ENCODE measurements at regions of chr2 and their contacts with region 1.

Region 1: DNA sequence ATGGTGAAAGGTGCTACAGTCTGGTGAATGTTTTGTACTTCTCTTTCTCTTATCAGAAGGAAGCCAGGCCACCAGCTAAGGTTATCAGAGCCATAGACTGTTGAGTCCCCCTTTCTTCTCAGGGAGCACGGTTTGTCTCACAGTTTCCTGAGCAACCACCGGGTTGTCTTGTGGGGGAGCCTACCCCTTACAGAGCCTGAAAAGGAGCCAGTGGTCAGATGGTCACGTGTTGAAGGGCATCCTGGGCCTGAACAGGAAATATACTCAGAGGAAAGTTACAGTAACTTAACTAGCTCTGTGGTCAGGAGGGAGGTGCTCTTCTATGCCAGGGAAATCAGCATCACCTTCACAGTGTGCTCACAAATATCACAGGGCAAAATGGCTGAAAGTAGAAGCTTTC is 11.6 kb downstream of the CD28 start:
- DNase-seq: peak; percentile 91
- ATAC-seq: peak; percentile 86
- H3K4me3 Mint-ChIP-seq: peak overlapping the region; percentile 34
- H3K27ac Mint-ChIP-seq: peak overlapping the region; percentile 88
- H3K4me1 Mint-ChIP-seq: peaks cover 89% of the 10 kb centered on the region
- H3K27me3 Mint-ChIP-seq: no peaks in the 10 kb centered on the region

Region 2: GRCh38 chr2:203706403-203706802 is 11.7 kb before region 1 on chr2 and contains the start of gene CD28:
- CTCF ChIA-PET with region 1: interaction called, 16 read pairs
- DNase-seq: peak; percentile 96
- ATAC-seq: peak; percentile 87
- H3K4me3 Mint-ChIP-seq: peak within 1 kb of the TSS; percentile 87
- H3K27ac Mint-ChIP-seq: peak within 1 kb of the TSS; percentile 95
- H3K4me1 Mint-ChIP-seq: peaks cover 49% of the 10 kb centered on the region
- H3K27me3 Mint-ChIP-seq: no peaks in the 10 kb centered on the region
- total RNA-seq, gene CD28: 30.5 to 35.7 TPM

Region 3: GRCh38 chr2:203730076-203730729 is 12.1 kb after region 1 on chr2:
- CTCF ChIA-PET with region 1: interaction called, 56 read pairs
- DNase-seq: no peak
- ATAC-seq: peak; percentile 79
- H3K4me3 Mint-ChIP-seq: peak overlapping the region; percentile 27
- H3K27ac Mint-ChIP-seq: peak overlapping the region; percentile 88
- H3K4me1 Mint-ChIP-seq: peaks cover 81% of the 10 kb centered on the region
- H3K27me3 Mint-ChIP-seq: no peaks in the 10 kb centered on the region

Region 4: GRCh38 chr2:203740780-203741281 is 22.7 kb after region 1 on chr2:
- CTCF ChIA-PET with region 1: interaction called, 24 read pairs
- DNase-seq: peak; percentile 61
- ATAC-seq: peak; percentile 72
- H3K4me3 Mint-ChIP-seq: peak overlapping the region; percentile 47
- H3K27ac Mint-ChIP-seq: peak overlapping the region; percentile 96
- H3K4me1 Mint-ChIP-seq: peaks cover 76% of the 10 kb centered on the region
- H3K27me3 Mint-ChIP-seq: no peaks in the 10 kb centered on the region

Region 5: DNA sequence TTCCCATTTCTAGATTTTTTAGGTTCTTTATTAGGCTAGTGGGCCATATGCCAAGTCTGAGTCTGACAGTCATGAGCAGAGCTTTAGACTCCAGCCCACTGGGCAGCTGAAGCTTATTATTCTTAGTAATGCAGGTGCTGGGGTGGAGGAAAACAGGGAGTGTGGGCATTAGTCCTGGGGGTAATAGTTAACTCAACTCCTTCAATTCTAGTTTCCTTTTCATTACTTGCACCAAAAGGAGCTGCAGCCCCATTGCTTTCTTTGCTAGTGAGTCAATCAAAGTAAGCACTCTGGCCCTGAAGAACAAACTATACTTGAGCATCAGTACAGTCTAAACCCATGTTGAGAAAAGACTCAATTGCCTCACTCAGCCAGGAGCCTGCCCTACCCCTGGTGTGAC is 254.0 kb after region 1 on chr2:
- CTCF ChIA-PET with region 1: no interaction called
- DNase-seq: no peak
- ATAC-seq: no peak
- H3K4me3 Mint-ChIP-seq: no peak overlapping the region
- H3K27ac Mint-ChIP-seq: no peak overlapping the region
- H3K4me1 Mint-ChIP-seq: peaks cover 9% of the 10 kb centered on the region
- H3K27me3 Mint-ChIP-seq: peaks cover 4% of the 10 kb centered on the region

Measured in activated CD8-positive, alpha-beta memory T cell treated with anti-CD3 and anti-CD28 coated beads, Interleukin-2, amount 10 ng/mL, durations not matched to agents 7 days and 5 days (primary cell).